Panc1 (cell line): ENCODE measurements at regions of chr7 and their contacts with region 1.

Region 1: GRCh38 chr7:82810558-82811259 is 352.0 kb downstream of the PCLO start:
- DNase-seq: peak; percentile 48
- ATAC-seq: peak; percentile 86
- H3K4me3 ChIP-seq: no peak overlapping the region
- H3K27ac ChIP-seq: no peak overlapping the region
- H3K4me1 ChIP-seq: no peaks in the 10 kb centered on the region
- H3K27me3 ChIP-seq: no peaks in the 10 kb centered on the region
- CTCF ChIP-seq: peak; percentile 73; the same call in 1 of the 2 replicates

Region 2: DNA sequence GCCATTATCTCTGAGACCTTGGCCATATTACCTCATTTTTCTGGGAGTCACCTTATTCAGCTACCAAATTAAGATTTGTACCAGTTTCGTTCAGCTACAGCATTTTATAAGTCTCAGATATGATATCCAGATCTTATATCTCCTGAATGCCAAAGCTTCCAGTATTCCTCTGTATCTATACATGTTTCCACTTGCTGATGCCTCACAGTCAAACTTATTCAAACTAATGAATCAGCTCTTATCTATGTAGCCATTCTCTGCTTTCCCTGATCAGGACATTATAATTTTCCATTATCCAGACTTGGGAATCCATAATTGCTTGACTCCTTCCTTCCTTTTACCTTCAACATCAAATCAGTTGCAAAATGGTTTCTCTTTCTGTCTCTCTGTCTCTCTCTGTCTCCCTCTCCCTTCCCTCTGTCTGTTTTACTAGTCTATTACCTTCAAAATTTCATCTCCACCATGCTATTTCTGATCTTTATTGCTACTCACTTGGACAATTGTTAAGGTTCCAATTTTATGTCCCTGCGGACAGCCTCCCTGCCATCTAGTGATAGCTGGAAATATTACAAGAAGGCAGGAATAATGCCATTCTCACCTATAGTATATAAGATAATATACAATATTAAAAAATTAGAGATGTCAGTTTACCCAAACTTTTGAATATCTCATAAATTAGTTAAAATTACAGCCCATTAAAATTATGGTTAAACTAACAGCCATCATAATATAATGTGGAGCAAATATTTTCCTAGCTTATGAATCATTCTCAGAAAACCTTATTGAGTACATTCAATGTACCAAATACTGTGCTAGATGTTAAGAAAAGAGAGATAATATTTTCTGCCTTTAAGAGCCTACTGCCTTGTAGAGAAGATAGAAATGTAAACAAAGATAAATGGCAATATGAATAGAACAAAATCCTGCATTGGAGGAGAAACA is 262.1 kb after region 1 on chr7:
- CTCF ChIA-PET with region 1: no interaction called
- POLR2A ChIA-PET with region 1: no interaction called
- in situ Hi-C with region 1: no loop called
- intact Hi-C with region 1: loop called (anchors 5 kb)
- DNase-seq: no peak
- ATAC-seq: no peak
- H3K4me3 ChIP-seq: no peak overlapping the region
- H3K27ac ChIP-seq: no peak overlapping the region
- H3K4me1 ChIP-seq: no peaks in the 10 kb centered on the region
- H3K27me3 ChIP-seq: no peaks in the 10 kb centered on the region
- CTCF ChIP-seq: peak; percentile 49; the same call in 1 of the 2 replicates

Region 3: DNA sequence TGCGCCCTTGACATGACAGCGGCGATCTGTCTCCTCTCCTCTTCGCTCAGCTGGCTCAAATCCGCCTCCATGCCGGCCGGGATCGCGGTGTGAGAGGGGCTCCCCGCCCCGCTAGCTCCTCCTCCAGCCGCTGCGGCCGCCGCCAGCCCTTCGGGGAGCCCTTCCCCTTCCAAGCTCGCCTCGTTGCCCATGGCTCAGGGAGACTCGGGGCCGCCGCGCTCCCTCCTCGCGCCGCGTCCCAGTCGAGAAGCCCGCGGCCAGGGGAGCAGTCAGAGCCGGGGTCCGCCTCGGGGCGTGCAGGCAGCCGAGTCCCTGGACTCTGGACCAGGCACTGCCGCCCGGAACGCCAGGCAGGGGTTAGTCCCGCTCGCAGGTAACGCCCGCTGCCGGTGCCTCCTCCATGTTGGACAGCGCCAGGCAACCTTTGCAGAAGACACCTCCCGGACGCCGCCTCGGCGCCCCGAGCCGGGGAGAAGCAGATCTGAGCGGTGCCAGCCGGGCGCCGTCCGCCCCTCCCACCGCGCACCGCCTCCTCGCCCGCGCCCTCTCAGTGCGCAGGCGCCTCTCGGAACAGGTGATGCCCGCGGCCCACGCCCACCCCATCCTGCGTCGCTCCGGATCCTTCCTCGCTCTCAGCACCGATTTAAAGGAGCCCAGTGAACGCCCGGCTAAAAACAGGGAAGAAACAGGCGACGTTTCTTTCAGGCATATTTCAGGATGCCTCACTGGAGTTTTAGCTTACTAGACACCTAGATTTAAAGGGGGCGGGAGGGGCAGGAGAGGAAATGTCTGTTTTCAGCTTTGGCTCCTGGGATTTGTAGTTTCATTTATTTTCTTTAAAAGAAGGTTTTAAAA is 351.9 kb after region 1 on chr7 and contains the start of gene PCLO:
- CTCF ChIA-PET with region 1: no interaction called
- POLR2A ChIA-PET with region 1: no interaction called
- in situ Hi-C with region 1: no loop called
- intact Hi-C with region 1: loop called (anchors 10 kb)
- DNase-seq: peak; percentile 62
- ATAC-seq: peak; percentile 100
- H3K4me3 ChIP-seq: peak within 1 kb of the TSS; percentile 55 to 76
- H3K27ac ChIP-seq: peak within 1 kb of the TSS; percentile 42; the same call in 1 of the 2 replicates
- H3K4me1 ChIP-seq: no peaks in the 10 kb centered on the region
- H3K27me3 ChIP-seq: peaks cover 7% of the 10 kb centered on the region
- CTCF ChIP-seq: no peak
- total RNA-seq, gene PCLO: 1.1 TPM

Region 4: DNA sequence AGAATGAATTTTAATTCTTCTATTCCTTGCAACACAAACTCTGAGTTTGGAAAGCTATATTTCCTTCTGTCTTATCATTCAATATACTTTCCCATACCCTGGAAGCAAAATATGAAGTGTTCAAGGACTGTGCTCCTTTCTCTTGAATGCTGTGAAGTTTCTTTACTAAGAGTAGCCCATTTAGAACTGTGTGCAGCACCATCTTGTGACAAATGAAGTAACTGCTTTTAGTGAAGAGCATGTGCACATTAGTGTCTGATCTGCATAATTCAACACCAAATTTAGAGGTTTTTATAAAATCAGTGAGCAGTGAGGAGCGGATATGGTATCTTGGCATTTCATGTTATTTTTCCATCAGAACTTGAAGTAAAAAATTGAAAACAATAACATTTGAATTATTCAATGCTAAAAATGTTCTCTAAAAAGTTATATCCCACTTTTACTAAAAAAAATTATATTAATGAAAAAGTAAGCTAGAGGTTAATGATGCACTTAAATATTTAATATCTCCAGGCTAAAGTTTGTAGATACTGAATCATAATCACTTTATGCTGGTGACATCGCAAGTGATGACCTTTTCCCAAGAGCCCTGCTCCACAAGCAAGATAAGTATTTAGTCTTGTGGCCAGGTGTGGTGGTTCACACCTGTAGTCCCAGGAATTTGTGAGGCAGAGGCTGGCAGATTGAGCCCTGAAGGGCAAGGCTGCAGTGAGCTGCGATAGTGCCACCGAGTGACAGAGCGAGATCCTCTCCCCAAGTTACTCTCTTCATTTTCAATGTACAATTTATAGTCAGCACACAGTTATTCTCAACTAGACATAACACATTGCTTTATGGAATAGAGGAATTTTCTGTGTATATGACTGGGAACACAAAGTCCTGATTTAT is 460.7 kb after region 1 on chr7:
- CTCF ChIA-PET with region 1: no interaction called
- POLR2A ChIA-PET with region 1: no interaction called
- in situ Hi-C with region 1: no loop called
- intact Hi-C with region 1: loop called (anchors 2 kb)
- DNase-seq: peak; percentile 17
- ATAC-seq: peak; percentile 75
- H3K4me3 ChIP-seq: no peak overlapping the region
- H3K27ac ChIP-seq: no peak overlapping the region
- H3K4me1 ChIP-seq: no peaks in the 10 kb centered on the region
- H3K27me3 ChIP-seq: no peaks in the 10 kb centered on the region
- CTCF ChIP-seq: peak; percentile 47; the same call in 1 of the 2 replicates